GM10248 (cell line): ENCODE measurements at regions of chr4 and their contacts with region 1.

Region 1: GRCh38 chr4:169110633-169111032 is 100.6 kb upstream of the CBR4 start:
- DNase-seq: no peak
- CTCF ChIP-seq: no peak

Region 2: GRCh38 chr4:169099771-169100180 is 10.9 kb before region 1 on chr4:
- CTCF ChIA-PET with region 1: interaction called, 14 read pairs
- POLR2A ChIA-PET with region 1: no interaction called
- DNase-seq: peak; percentile 30
- CTCF ChIP-seq: no peak

Region 3: DNA sequence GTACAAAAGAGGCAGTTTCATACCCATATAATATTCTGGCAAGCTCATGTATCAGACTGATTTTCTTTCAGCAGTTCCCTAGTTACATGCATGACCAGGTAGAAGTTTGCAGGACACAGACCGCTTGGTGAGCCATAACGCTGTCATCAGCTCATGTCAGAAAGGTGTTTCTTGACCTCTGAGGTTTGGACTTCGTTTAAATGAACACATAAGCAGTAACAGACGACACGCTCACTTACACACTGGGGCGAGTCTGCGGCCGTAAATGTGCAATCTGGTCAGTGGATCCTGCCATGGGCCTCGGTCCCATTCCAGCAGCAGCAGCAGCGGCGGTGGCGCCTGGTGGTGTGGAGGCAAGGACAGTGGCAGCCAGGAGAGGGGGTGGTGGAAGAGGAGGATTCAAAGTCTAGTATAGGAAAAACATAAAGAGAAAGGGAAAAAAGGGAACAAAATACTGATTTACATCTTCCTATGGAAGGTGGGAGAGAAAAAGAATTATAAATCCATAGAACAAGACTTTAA is 11.3 kb after region 1 on chr4:
- CTCF ChIA-PET with region 1: interaction called, 11 read pairs
- POLR2A ChIA-PET with region 1: no interaction called
- DNase-seq: no peak
- CTCF ChIP-seq: no peak